ENCODE measurements at regions of chr1 and their contacts with region 1.

Region 1: GRCh38 chr1:91282695-91283420 is 121.8 kb downstream of the HFM1 start:
- DNase-seq: peak; percentile 69
- H3K4me3 ChIP-seq: peak overlapping the region in 1 of 2 experiments; percentile 26; a peak in 1 of 4 replicates
- H3K27ac ChIP-seq: no peak overlapping the region
- H3K4me1 ChIP-seq: no peaks in the 10 kb centered on the region
- H3K27me3 ChIP-seq: no peaks in the 10 kb centered on the region
- CTCF ChIP-seq: peak; percentile 81
- EP300 ChIP-seq: no peak
- RAD21 ChIP-seq: peak; percentile 86

Region 2: GRCh38 chr1:91217911-91218310 is 64.9 kb before region 1 on chr1:
- CTCF ChIA-PET with region 1: no interaction called
- POLR2A ChIA-PET with region 1: no interaction called
- DNase-seq: no peak
- H3K4me3 ChIP-seq: no peak overlapping the region; a peak in 1 of 4 replicates
- H3K27ac ChIP-seq: no peak overlapping the region
- H3K4me1 ChIP-seq: no peaks in the 10 kb centered on the region
- H3K27me3 ChIP-seq: no peaks in the 10 kb centered on the region
- CTCF ChIP-seq: no peak
- EP300 ChIP-seq: no peak
- RAD21 ChIP-seq: no peak

Region 3: DNA sequence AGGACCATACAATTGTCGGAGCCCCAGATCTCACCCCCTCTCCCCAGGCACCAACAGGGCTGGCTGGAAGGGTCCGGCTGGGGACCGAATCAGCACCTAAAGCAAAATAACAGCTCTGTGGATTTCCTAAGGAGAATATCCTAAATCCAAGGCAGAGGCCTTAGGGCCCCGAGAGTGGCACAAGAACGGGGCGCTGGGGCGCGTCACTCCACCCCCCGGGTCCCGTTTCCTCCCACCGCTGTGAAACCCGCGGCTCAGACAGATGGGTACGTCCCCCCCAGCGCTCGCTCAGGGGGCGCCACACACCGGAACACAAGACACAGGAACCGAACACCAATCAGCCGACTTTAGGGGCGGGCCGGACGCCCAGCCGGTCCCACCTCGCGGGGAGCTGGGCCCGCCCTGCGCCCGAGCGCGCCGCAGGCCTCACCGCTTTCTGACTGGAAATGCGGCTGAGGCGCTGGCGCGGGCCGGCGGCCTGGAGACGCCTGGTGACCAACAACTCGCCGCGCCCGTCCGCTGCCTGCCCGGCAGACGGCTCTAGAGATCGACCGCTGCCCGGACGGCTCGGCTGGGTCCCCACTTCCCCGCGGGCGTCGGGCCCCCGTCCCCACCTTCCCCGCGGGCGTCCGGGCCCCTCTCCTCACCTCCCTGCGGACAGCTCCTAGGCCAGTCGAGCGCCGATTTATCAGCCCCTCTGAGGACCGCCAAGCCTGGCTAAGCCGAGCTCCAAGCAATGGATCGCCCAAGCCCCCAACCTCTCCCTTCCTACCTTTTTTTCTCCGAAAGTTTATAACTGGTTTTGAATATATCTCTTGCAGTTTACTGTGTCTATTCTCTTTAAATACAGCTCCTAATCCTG is 121.5 kb after region 1 on chr1 and contains the start of gene HFM1:
- CTCF ChIA-PET with region 1: interaction called, 22 read pairs
- POLR2A ChIA-PET with region 1: no interaction called
- DNase-seq: peak; percentile 92
- H3K4me3 ChIP-seq: peak within 1 kb of the TSS; percentile 53 to 73
- H3K27ac ChIP-seq: peak within 1 kb of the TSS in 1 of 2 experiments; percentile 86; a peak in 2 of 4 replicates
- H3K4me1 ChIP-seq: no peaks in the 10 kb centered on the region; a peak in 2 of 4 replicates
- H3K27me3 ChIP-seq: 0 out of 2 replicates have a peak, but pooled peaks cover 5% of the 10 kb centered on the region
- CTCF ChIP-seq: no peak
- EP300 ChIP-seq: no peak
- RAD21 ChIP-seq: no peak
- polyA plus RNA-seq, gene HFM1: 0.06 and 0.10 TPM in 2 replicates

Measured in SK-N-SH (cell line).